H1 (cell line): ENCODE measurements at regions of chr1 and their contacts with region 1.

Region 1: DNA sequence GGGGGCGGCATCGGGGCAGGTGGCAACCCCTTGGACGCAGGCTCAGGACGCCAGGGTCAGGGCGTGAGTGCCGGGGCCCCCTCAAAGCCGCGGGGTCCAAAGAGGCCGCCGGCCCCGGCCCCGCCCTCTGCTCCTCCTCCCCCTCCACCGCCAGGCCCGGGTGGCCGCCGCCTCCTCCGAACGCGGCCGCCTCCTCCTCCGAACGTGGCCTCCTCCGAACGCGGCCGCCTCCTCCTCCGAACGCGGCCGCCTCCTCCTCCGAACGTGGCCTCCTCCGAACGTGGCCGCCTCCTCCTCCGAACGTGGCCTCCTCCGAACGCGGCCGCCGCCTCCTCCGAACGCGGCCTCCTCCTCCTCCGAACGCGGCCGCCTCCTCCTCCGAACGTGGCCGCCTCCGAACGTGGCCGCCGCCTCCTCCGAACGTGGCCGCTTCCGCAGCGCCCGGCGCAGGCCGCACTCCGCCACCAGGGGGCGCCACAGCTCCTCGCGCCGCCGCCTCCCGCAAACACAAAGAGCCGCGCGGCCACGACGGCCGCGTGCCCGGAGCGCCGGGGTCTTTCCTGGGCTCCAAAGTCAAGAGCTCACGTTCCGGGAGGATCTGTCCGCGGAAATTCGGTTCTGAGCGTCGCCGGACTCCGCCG is 19.3 kb upstream of the SAMD11 start:
- DNase-seq: peak in 1 of 2 experiments; percentile 96
- H3K4me3 ChIP-seq: peak overlapping the region in 2 of 4 experiments; percentile 28 to 64; a peak in 3 of 8 replicates
- H3K27ac ChIP-seq: no peak overlapping the region
- H3K4me1 ChIP-seq: peaks cover 0 to 5% (median 2%) of the 10 kb centered on the region in 4 experiments; a peak in 4 of 7 replicates
- H3K27me3 ChIP-seq: peaks cover 24 to 42% (median 36%) of the 10 kb centered on the region in 4 experiments
- CTCF ChIP-seq: peak; percentile 77 to 90 (median 82)
- EP300 ChIP-seq: peak in 1 of 2 experiments; percentile 57; a peak in 1 of 3 replicates
- POLR2A ChIP-seq: peak in 1 of 2 experiments; percentile 58; a peak in 1 of 3 replicates
- RAD21 ChIP-seq: peak; percentile 70 to 85

Region 2: GRCh38 chr1:921011-921837 is 16.8 kb after region 1 on chr1:
- CTCF ChIA-PET with region 1: interaction called, 20 read pairs
- POLR2A ChIA-PET with region 1: interaction called, 9 read pairs
- DNase-seq: peak in 1 of 2 experiments; percentile 43
- H3K4me3 ChIP-seq: peak overlapping the region in 1 of 4 experiments; percentile 44; a peak in 3 of 8 replicates
- H3K27ac ChIP-seq: no peak overlapping the region
- H3K4me1 ChIP-seq: peaks cover 0 to 38% (median 21%) of the 10 kb centered on the region in 4 experiments; a peak in 6 of 7 replicates
- H3K27me3 ChIP-seq: peaks cover 65 to 98% (median 89%) of the 10 kb centered on the region in 4 experiments
- CTCF ChIP-seq: peak in 2 of 3 experiments; percentile 28 to 66; a peak in 3 of 4 replicates
- EP300 ChIP-seq: peak in 1 of 2 experiments; percentile 46; a peak in 1 of 3 replicates
- POLR2A ChIP-seq: no peak
- RAD21 ChIP-seq: peak in 1 of 2 experiments; percentile 45; a peak in 2 of 4 replicates